Caco-2 (cell line): ENCODE measurements at regions of chr5 and their contacts with region 1.

Region 1: DNA sequence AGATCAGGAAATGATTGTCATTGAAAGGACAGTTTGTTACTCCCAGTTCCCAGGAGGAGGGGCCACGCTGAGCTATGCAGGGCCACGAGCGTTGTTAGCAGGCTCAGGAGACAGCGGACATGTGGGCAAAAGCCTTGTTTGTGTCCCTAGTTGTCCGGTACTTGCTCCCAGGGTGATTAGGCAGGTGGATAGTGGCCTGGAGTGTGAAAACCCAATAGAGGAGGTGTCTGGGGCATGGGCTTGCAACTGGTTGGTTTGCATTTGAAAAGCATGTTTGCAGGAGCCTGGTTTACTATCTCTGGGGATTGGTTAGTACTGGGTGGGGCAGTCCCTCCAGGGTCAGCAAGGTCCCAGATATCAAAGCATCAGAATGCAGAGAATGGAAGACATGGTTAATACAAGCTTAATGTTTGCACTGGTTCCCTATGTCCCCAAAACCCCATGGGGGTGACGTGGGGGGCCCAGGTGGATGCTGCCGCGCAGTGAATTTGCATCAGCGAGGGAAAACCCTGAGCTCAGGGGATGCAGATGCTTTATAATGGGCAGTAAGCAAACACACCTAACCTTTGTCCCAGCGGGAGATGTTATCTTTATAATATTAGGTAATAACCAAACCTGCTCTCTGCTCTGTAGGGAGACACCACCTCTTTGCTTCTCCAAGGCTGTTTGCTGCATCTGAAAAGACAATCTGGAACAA is 39.7 kb downstream of the ROPN1L start:
- DNase-seq: peak; percentile 84 to 90
- H3K4me3 ChIP-seq: no peak overlapping the region
- H3K4me3 Mint-ChIP-seq: peak overlapping the region; percentile 37
- H3K27ac Mint-ChIP-seq: peak overlapping the region; percentile 90
- H3K4me1 ChIP-seq: peaks cover 59% of the 10 kb centered on the region
- H3K4me1 Mint-ChIP-seq: peaks cover 50% of the 10 kb centered on the region
- H3K27me3 ChIP-seq: no peaks in the 10 kb centered on the region; the same call in 1 of the 2 replicates
- H3K27me3 Mint-ChIP-seq: no peaks in the 10 kb centered on the region
- CTCF ChIP-seq: no peak

Region 2: GRCh38 chr5:10353241-10354047 is 127.9 kb before region 1 on chr5 and contains the start of gene MARCHF6:
- CTCF ChIA-PET with region 1: interaction called, 7 read pairs
- POLR2A ChIA-PET with region 1: interaction called, 3 read pairs
- intact Hi-C with region 1: loop called (anchors 5 kb)
- DNase-seq: peak; percentile 96 to 98
- H3K4me3 ChIP-seq: peak within 1 kb of the TSS; percentile 78
- H3K4me3 Mint-ChIP-seq: peak within 1 kb of the TSS; percentile 97
- H3K27ac Mint-ChIP-seq: peak within 1 kb of the TSS; percentile 99
- H3K4me1 ChIP-seq: peaks cover 7% of the 10 kb centered on the region; the same call in 1 of the 2 replicates
- H3K4me1 Mint-ChIP-seq: peaks cover 7% of the 10 kb centered on the region
- H3K27me3 ChIP-seq: no peaks in the 10 kb centered on the region
- H3K27me3 Mint-ChIP-seq: no peaks in the 10 kb centered on the region
- CTCF ChIP-seq: no peak
- total RNA-seq, gene MARCHF6: 111 and 123 TPM in 2 replicates

Region 3: DNA sequence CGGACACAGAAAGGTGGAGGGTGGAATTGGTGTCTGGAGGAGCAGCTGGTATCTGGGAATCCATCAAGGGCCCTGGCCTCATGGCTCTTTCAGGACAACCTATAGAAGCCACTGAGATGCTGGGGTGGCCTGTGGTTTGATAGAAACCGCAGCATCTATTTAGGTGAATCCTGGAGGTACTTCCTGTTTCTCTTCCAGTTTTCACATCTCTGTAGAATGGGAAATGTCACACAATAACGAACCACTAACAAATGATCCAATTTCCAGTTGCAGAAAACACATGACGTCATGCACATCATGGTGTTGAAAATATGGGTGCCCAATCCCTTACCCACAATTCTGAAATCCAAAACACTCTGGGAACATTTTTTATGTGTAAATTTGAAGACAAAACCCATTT is 12.5 kb after region 1 on chr5:
- CTCF ChIA-PET with region 1: interaction called, 3 read pairs
- POLR2A ChIA-PET with region 1: no interaction called
- intact Hi-C with region 1: loop called (anchors 2 kb)
- DNase-seq: no peak
- H3K4me3 ChIP-seq: no peak overlapping the region
- H3K4me3 Mint-ChIP-seq: no peak overlapping the region
- H3K27ac Mint-ChIP-seq: no peak overlapping the region
- H3K4me1 ChIP-seq: no peaks in the 10 kb centered on the region; the same call in 1 of the 2 replicates
- H3K4me1 Mint-ChIP-seq: no peaks in the 10 kb centered on the region
- H3K27me3 ChIP-seq: no peaks in the 10 kb centered on the region
- H3K27me3 Mint-ChIP-seq: no peaks in the 10 kb centered on the region
- CTCF ChIP-seq: no peak

Region 4: DNA sequence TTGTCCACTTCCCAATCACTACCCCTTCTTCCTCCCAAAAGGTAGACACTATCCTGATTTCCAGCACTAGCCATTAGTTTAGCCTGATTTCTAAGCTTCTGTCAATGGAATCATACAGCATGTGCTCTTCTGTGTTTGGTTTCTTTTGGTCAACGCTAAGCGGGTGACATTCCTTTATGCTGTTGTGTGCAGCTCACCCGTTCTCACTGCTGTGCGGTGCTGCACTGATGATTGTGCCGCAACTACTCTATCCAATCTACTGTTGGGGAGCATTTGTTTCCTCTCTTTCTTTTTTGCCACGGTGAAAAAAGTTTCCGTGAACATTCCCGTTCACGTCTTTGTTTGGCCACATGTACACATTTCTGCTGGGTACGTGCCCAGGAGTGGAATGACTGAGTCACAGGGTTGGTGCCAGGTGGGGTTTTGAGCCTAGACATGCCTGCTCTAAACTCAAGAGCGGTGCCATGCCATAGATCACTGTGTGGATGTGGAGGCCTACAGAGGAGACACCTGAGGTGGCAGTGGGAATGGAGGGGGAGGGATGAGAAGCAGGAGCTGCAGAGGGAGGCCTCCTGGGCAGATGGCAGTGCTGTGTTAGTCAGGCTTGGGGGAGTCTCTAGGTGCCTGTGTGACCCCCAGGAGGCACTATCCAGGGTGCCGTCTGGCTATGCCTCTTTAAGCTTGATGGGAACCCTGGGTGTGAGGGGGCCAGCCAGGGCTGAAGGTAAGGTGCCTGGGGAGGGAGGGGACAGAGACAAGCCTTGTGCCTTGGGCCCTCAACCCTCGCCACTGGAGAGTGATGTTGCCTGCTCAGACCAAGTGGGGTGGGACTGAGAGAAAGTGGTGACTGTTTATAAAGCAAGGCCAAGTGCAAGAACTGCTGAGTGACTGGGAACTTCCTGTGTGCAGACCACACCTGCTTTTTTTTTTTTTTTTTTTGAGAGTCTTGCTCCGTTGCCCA is 71.1 kb after region 1 on chr5:
- CTCF ChIA-PET with region 1: interaction called, 5 read pairs
- POLR2A ChIA-PET with region 1: interaction called, 4 read pairs
- intact Hi-C with region 1: loop called (anchors 1 kb)
- DNase-seq: no peak
- H3K4me3 ChIP-seq: no peak overlapping the region
- H3K4me3 Mint-ChIP-seq: peak overlapping the region; percentile 56
- H3K27ac Mint-ChIP-seq: peak overlapping the region; percentile 97
- H3K4me1 ChIP-seq: peaks cover 56% of the 10 kb centered on the region
- H3K4me1 Mint-ChIP-seq: peaks cover 57% of the 10 kb centered on the region
- H3K27me3 ChIP-seq: no peaks in the 10 kb centered on the region
- H3K27me3 Mint-ChIP-seq: no peaks in the 10 kb centered on the region
- CTCF ChIP-seq: no peak

Region 5: GRCh38 chr5:10627160-10627701 is 145.8 kb after region 1 on chr5:
- CTCF ChIA-PET with region 1: no interaction called
- POLR2A ChIA-PET with region 1: no interaction called
- intact Hi-C with region 1: loop called (anchors 1 kb)
- DNase-seq: no peak
- H3K4me3 ChIP-seq: no peak overlapping the region
- H3K4me3 Mint-ChIP-seq: peak overlapping the region; percentile 42
- H3K27ac Mint-ChIP-seq: peak overlapping the region; percentile 56
- H3K4me1 ChIP-seq: peaks cover 5% of the 10 kb centered on the region; the same call in 1 of the 2 replicates
- H3K4me1 Mint-ChIP-seq: no peaks in the 10 kb centered on the region
- H3K27me3 ChIP-seq: no peaks in the 10 kb centered on the region
- H3K27me3 Mint-ChIP-seq: no peaks in the 10 kb centered on the region
- CTCF ChIP-seq: no peak

Region 6: GRCh38 chr5:10637944-10638343 is 156.6 kb after region 1 on chr5:
- CTCF ChIA-PET with region 1: no interaction called
- POLR2A ChIA-PET with region 1: no interaction called
- intact Hi-C with region 1: no loop called
- DNase-seq: no peak
- H3K4me3 ChIP-seq: no peak overlapping the region
- H3K4me3 Mint-ChIP-seq: no peak overlapping the region
- H3K27ac Mint-ChIP-seq: no peak overlapping the region
- H3K4me1 ChIP-seq: no peaks in the 10 kb centered on the region
- H3K4me1 Mint-ChIP-seq: no peaks in the 10 kb centered on the region
- H3K27me3 ChIP-seq: no peaks in the 10 kb centered on the region
- H3K27me3 Mint-ChIP-seq: no peaks in the 10 kb centered on the region
- CTCF ChIP-seq: no peak